ENCODE measurements at regions of chr5 and their contacts with region 1.

Region 1: DNA sequence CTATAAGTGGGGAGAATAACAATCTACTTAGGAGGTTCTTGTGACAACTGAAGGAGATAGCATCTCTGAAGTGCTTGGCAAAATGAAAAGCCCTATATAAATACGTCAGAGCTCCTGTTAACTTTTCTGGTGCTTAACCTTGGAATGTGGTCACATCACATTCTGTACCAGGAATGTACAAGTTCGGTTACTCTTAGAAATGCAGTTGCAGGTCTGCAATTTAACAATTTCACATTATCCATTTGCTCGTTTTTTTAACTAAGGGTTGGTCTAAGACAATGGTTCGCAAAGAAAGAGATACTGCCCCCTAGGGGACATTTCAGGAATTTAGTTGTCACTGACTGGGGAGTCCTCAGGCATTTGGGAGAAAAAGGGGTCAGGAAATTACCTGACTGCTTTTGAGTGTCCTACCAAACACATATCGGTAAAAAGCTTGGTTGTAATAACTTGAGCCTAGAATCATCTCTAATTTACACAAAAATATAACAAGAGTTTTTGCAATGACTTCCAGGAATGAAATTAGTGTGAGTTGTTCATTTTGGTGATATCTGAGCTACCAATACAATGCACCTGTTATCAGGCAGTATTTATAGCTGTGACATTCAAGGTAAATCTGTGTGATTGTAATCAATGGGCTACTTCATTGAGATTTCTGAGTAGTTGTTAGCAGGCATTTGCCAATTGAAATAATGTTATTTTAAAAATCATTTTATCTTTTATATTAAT is 5.4 kb upstream of the HBEGF start:
- DNase-seq: peak in 1 of 2 experiments; percentile 75
- H3K4me3 ChIP-seq: no peak overlapping the region
- H3K27ac ChIP-seq: no peak overlapping the region
- H3K4me1 ChIP-seq: peaks cover 0 to 3% (median 0%) of the 10 kb centered on the region in 4 experiments; a peak in 1 of 7 replicates
- H3K27me3 ChIP-seq: no peaks in the 10 kb centered on the region
- CTCF ChIP-seq: peak in 2 of 3 experiments; percentile 59 to 71; a peak in 3 of 4 replicates
- EP300 ChIP-seq: no peak
- POLR2A ChIP-seq: no peak
- RAD21 ChIP-seq: peak; percentile 48 to 58

Region 2: GRCh38 chr5:140073296-140073695 is 278.5 kb before region 1 on chr5:
- CTCF ChIA-PET with region 1: no interaction called
- POLR2A ChIA-PET with region 1: no interaction called
- DNase-seq: no peak
- H3K4me3 ChIP-seq: no peak overlapping the region
- H3K27ac ChIP-seq: no peak overlapping the region
- H3K4me1 ChIP-seq: no peaks in the 10 kb centered on the region
- H3K27me3 ChIP-seq: no peaks in the 10 kb centered on the region
- CTCF ChIP-seq: peak in 2 of 3 experiments; percentile 7 to 22; a peak in 2 of 4 replicates
- EP300 ChIP-seq: no peak
- POLR2A ChIP-seq: no peak
- RAD21 ChIP-seq: peak in 1 of 2 experiments; percentile 32; a peak in 3 of 4 replicates

Region 3: DNA sequence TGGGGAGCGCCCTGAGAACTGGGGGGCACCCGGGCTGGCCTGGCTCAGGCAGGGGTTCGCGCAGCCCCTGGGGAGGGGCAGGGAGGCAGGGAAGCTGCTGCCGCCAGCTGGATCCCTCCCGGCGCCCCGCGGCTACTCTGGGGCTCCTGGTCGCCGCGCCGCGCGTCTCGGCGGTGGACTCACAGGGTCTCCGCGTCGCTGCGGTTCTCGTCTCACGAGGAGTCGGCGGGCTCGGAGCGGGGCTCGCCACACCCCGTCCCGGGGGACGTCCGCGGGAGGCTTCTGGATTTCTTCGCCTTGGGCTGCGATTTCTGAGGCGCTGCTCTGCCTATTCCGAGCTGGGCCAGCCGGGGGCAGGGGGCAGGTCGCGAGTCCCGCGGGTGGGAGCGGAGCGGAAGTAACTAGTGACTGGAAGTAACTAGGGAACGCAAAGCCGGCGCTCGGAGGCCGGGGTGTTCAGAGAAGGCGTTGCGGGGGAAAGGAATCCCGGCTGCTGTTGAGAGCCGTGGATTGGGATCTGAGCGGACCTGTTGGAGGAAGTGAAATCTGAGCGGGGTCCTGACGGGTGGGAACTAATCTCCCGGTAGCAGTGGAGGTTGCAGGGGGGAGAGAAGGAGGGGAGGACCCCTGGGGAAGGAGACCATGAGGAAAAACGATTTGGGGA is 176.3 kb before region 1 on chr5:
- CTCF ChIA-PET with region 1: interaction called, 10 read pairs
- POLR2A ChIA-PET with region 1: no interaction called
- DNase-seq: no peak
- H3K4me3 ChIP-seq: peak overlapping the region; percentile 60 to 93 (median 80)
- H3K27ac ChIP-seq: peak overlapping the region; percentile 65; the same call in 1 of the 2 replicates
- H3K4me1 ChIP-seq: peaks cover 0 to 4% (median 1%) of the 10 kb centered on the region in 4 experiments; a peak in 4 of 7 replicates
- H3K27me3 ChIP-seq: no peaks in the 10 kb centered on the region
- CTCF ChIP-seq: peak in 1 of 3 experiments; percentile 15; a peak in 1 of 4 replicates
- EP300 ChIP-seq: no peak
- POLR2A ChIP-seq: no peak
- RAD21 ChIP-seq: no peak

Region 4: DNA sequence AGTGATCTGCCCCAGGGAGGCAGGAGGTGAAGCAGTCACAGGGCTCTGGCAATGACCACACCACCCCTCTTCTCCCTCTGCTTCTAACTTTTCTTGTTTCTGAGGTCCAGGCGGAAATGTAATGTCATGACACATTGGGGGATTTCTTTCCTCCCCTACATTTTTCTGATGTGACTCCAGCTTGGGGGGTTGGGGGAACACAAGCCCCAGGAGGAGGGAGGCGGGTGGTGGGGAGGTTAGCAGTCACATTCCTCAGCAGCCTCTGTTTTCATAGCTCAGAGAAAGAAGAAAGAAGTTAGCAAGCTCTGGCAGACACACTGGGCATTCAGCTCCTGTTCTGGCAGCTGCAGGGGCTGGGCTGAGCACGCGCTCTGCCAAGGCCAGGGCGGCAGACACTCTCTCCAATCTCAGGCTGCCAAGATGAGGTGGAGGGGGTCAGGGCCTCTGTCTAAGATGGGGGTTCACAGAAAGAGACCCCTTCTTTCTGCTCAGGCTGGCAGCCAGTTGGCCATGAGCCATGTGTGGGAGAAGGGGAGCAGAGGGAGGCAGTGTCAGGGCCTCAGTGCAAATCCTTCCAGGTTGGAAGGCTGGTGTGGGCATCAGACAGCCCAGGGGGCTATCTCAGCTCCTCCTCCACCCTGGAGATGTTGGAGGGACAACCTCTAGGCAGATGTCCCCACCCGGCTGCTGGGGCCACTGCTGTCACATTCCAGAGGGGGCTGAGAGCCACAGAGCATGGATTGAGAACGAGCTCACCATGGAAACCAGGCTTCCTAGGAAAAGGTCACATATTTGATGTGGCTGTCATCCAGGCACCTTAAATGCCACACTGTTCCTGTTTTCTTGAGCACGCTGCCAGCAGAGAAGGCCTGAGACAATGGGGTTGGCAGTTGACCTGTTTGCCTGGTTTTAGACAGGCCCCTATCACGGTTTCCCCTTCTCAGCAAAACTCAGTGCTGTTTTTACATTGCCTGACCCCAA is 28.7 kb before region 1 on chr5:
- CTCF ChIA-PET with region 1: interaction called, 45 read pairs
- POLR2A ChIA-PET with region 1: interaction called, 13 read pairs
- DNase-seq: no peak
- H3K4me3 ChIP-seq: no peak overlapping the region
- H3K27ac ChIP-seq: no peak overlapping the region
- H3K4me1 ChIP-seq: peaks cover 0 to 5% (median 0%) of the 10 kb centered on the region in 4 experiments; a peak in 3 of 7 replicates
- H3K27me3 ChIP-seq: no peaks in the 10 kb centered on the region
- CTCF ChIP-seq: no peak
- EP300 ChIP-seq: no peak
- POLR2A ChIP-seq: no peak
- RAD21 ChIP-seq: no peak

Region 5: DNA sequence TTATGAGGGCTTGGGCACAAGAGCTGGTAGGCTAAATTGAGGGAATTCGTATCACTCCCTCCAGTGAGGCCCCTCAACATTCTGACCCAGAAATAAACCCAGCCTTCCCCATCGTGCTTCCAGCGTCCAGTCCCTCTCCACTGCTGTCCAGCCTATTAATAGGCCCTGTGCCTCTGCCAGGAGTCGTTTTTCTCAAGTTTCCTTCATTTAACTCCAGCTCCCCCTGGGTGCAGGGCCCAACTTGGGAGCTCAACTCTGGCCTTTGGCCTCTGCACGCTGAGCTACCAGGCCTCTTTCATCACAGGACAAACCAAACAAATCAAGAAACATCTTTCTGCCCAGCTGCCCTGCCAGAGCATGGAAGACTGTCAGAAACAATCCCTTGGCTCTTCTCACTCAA is 15.4 kb before region 1 on chr5:
- CTCF ChIA-PET with region 1: interaction called, 45 read pairs
- POLR2A ChIA-PET with region 1: interaction called, 22 read pairs
- DNase-seq: no peak
- H3K4me3 ChIP-seq: no peak overlapping the region
- H3K27ac ChIP-seq: no peak overlapping the region
- H3K4me1 ChIP-seq: no peaks in the 10 kb centered on the region
- H3K27me3 ChIP-seq: no peaks in the 10 kb centered on the region
- CTCF ChIP-seq: no peak
- EP300 ChIP-seq: no peak
- POLR2A ChIP-seq: no peak
- RAD21 ChIP-seq: no peak

Region 6: DNA sequence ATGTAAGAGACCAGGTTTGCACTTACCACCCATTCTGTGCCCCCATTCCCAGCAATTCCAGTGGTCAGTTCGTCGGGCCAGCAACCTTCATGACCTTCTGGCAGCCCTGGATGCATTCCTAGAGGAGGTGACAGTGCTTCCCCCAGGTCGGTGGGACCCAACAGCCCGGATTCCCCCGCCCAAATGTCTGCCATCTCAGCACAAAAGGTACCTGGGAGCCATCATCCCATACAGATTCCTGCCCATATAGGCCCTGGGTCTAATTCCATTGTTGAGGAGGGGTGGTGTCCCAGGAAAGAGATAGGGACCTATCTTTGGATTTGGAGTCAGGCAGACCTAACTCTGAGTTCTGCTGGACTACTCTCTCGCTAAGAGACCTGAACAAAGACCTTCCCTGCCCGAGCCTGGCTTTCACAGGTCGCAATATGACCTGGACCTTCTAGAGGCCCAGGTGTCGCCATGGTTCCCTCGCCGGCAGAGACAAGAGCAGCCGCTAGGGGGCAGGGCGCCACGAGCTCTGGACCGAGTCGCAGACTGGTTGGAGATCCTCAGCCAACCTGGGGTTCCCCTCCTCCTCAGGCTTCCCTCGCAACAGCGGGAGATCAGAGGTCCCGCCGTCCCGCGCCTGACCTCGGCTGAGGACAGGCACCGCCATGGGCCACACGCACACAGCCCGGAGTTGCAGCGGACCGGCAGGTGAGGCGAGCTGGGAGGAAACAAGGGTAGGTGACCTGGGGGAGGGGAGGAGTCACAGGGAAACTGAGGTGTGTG is 11.3 kb after region 1 on chr5:
- CTCF ChIA-PET with region 1: interaction called, 45 read pairs
- POLR2A ChIA-PET with region 1: interaction called, 18 read pairs
- DNase-seq: peak in 1 of 2 experiments; percentile 99
- H3K4me3 ChIP-seq: peak overlapping the region; percentile 41 to 70 (median 62)
- H3K27ac ChIP-seq: no peak overlapping the region; the same call in 1 of the 2 replicates
- H3K4me1 ChIP-seq: peaks cover 0 to 8% (median 2%) of the 10 kb centered on the region in 4 experiments; a peak in 3 of 7 replicates
- H3K27me3 ChIP-seq: peaks cover 0 to 7% (median 2%) of the 10 kb centered on the region in 4 experiments; a peak in 2 of 7 replicates
- CTCF ChIP-seq: peak in 2 of 3 experiments; percentile 93 to 99; a peak in 3 of 4 replicates
- EP300 ChIP-seq: 0 out of 3 replicates have a peak, but pooled peaks of 1 of the 2 experiments have one; percentile 60
- POLR2A ChIP-seq: peak in 1 of 2 experiments; percentile 62; a peak in 2 of 3 replicates
- RAD21 ChIP-seq: peak; percentile 64 to 77

Region 7: DNA sequence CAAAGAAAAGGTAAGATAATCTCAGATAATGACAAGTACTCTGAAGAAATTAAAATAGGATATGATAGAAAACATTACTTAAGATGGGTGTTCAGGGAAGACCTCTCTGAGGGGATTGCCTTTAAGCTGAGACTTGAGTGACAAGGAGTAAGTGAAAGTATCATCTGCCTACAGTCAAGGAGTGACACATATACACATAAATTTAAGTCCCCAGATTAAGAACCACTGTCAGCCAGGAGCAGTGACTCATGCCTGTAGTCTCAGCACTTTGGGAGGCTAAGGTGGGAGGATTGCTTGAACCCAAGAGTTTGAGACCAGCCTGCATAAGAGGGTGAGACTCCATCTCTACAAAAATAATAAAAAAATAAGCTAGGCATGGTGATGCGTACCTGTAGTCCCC is 30.2 kb after region 1 on chr5:
- CTCF ChIA-PET with region 1: no interaction called
- POLR2A ChIA-PET with region 1: no interaction called
- DNase-seq: no peak
- H3K4me3 ChIP-seq: no peak overlapping the region
- H3K27ac ChIP-seq: no peak overlapping the region
- H3K4me1 ChIP-seq: no peaks in the 10 kb centered on the region
- H3K27me3 ChIP-seq: no peaks in the 10 kb centered on the region
- CTCF ChIP-seq: no peak
- EP300 ChIP-seq: no peak
- POLR2A ChIP-seq: no peak
- RAD21 ChIP-seq: no peak

Region 8: DNA sequence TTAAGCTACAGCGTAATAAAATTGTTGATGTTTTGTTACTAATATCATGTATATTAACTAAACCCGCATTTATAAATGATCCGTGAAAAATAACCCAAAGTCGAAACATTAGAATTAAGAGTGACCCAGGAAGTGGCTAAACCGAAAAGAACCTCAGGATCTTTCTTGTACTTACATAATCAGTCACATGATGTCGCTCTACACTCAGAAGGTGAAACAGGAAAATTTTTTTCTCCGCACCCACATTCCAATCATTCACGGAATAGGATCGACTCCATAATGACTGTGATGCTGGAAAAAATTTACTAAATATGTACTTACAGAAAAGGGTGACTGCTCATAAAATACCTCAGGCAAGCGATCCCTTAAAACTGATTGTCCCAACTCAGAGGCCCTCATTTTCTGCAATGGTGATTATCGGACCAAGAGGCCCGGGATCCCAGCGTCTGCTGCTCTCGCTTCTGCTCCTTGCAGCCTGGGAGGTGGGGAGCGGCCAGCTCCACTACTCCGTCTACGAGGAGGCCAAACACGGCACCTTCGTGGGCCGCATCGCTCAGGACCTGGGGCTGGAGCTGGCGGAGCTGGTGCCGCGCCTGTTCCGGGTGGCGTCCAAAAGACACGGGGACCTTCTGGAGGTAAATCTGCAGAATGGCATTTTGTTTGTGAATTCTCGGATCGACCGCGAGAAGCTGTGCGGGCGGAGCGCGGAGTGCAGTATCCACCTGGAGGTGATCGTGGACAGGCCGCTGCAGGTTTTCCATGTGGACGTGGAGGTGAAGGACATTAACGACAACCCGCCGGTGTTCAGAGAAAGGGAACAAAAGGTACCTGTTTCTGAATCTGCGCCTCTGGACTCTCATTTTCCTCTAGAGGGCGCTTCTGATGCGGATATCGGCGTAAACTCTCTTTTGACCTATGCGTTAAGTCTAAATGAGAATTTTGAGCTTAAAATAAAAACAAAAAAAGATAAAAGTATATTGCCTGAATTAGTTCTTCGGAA is 523.6 kb after region 1 on chr5 and contains the start of gene PCDHA12:
- CTCF ChIA-PET with region 1: no interaction called
- POLR2A ChIA-PET with region 1: no interaction called
- DNase-seq: no peak
- H3K4me3 ChIP-seq: peak within 1 kb of the TSS; percentile 55 to 67 (median 65)
- H3K27ac ChIP-seq: no peak within 1 kb of the TSS
- H3K4me1 ChIP-seq: no peaks in the 10 kb centered on the region; a peak in 2 of 7 replicates
- H3K27me3 ChIP-seq: no peaks in the 10 kb centered on the region
- CTCF ChIP-seq: peak in 2 of 3 experiments; percentile 64 to 69; a peak in 3 of 4 replicates
- EP300 ChIP-seq: no peak
- POLR2A ChIP-seq: peak in 1 of 2 experiments; percentile 68; a peak in 2 of 3 replicates
- RAD21 ChIP-seq: peak; percentile 69 to 73
- total RNA-seq, gene PCDHA12: 9.3 and 10.6 TPM in 2 replicates